Spleen (tissue), 13 donors: ENCODE measurements at regions of chr3 and their contacts with region 1.

Region 1: GRCh38 chr3:57755668-57756527 is at the start of gene SLMAP:
- DNase-seq: peak; percentile 100
- H3K4me3 ChIP-seq: peak within 1 kb of the TSS; percentile 87 to 98 (median 94)
- H3K27ac ChIP-seq: peak within 1 kb of the TSS; percentile 86 to 94 (median 90)
- H3K4me1 ChIP-seq: peaks cover 38 to 49% (median 44%) of the 10 kb centered on the region in 6 donors
- H3K27me3 ChIP-seq: no peaks in the 10 kb centered on the region
- CTCF ChIP-seq: peak in 4 of 11 experiments; percentile 8 to 21 (median 12)
- POLR2A ChIP-seq: peak in 2 of 3 donors; percentile 22 to 53
- total RNA-seq, gene SLMAP: 50.8 to 77.3 (median 70.4) TPM

Region 2: DNA sequence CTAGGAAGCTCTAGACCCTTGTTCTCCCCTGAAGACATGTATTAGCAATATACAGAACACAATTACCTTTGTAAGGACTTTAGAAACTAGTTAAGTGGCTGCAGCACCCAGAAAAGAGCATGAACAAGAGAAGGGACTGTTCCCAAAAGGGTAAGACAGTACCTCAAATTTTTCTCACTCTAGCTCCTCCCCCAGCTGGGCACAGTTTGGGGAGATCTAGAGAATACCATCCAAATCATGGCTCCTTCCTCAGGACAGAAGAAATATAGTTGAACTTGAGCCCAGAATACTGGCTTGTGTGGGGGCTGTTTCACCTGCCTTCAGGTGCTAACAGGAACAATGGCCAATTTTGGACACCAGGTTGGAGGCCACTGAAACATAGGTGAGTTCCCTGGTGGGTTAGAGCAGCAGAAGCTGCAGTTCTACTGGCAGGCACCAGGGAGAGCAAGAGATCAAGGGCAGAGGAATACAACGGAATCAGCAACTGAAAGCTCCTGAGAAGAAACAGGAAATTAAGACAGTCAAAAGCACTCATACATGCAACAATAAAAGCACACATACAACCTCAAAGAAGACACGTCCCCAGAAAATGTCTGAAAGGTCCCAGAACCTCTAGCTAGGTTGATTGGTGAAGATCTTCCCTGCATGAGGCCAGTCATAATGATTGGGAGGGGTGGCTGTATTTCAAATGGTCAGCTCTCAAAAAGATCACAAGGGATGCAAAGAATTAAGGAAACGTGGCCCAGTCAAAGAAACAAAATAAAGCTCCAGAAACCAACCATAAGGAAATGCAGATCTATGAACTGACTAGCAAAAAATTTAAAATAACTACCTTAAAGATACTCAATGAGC is 358.5 kb before region 1 on chr3:
- intact Hi-C with region 1: no loop called
- DNase-seq: no peak
- H3K4me3 ChIP-seq: peak overlapping the region in 1 of 8 donors; percentile 27
- H3K27ac ChIP-seq: no peak overlapping the region
- H3K4me1 ChIP-seq: peaks cover 0 to 8% (median 3%) of the 10 kb centered on the region in 6 donors
- H3K27me3 ChIP-seq: no peaks in the 10 kb centered on the region
- CTCF ChIP-seq: peak; percentile 62 to 85 (median 81)
- POLR2A ChIP-seq: no peak

Region 3: DNA sequence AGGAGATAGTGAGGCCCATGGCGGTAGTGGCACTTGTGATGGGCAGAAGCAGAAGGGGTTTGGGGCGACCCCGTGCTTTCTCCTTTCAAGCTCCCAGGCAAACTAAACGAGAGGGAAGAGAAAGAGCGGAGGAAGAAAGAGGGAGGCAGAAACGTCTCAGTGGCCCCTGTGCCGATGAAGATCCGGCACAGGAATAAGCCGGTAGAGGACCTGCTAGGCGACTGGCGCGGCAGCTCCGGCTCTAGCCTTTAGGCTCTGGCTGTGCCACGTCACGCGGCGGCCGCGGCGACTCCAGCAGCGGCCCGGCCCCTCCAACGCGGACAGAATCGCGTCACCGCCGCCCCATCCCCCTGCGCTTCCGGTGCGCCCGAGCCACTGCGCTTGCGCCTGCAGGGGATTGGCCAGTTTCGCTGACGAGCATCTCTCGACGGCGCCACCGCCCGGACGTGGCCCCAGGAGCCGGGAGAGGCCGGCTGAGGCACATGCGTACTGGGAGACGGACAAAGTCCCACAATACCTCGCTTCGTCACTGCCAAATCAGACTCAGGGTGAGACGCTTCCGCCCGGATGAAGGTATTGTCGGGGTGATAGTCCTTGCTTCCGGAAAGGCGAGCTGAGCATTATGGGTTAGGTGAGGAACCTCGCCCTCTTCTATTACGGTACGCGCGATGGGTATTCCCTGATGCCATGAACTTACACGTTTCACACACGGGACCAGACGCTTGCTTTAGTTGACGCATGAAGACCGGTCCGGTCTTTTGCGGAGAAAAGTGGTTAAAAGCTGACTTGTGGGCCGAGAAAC is 158.6 kb before region 1 on chr3 and contains the start of gene ARF4:
- intact Hi-C with region 1: loop called (anchors 10 kb)
- DNase-seq: peak; percentile 100
- H3K4me3 ChIP-seq: peak within 1 kb of the TSS; percentile 68 to 88 (median 80)
- H3K27ac ChIP-seq: peak within 1 kb of the TSS; percentile 95 to 99 (median 98)
- H3K4me1 ChIP-seq: peaks cover 32 to 65% (median 55%) of the 10 kb centered on the region in 6 donors
- H3K27me3 ChIP-seq: no peaks in the 10 kb centered on the region
- CTCF ChIP-seq: peak in 8 of 11 experiments; percentile 3 to 67 (median 54)
- POLR2A ChIP-seq: peak; percentile 85 to 95 (median 88)
- total RNA-seq, gene ARF4: 68.1 to 88.7 (median 75.0) TPM

Region 4: GRCh38 chr3:57692259-57693147 is 63.4 kb before region 1 on chr3 and contains the start of gene DENND6A:
- intact Hi-C with region 1: loop called (anchors 10 kb)
- DNase-seq: peak; percentile 100
- H3K4me3 ChIP-seq: peak within 1 kb of the TSS; percentile 77 to 98 (median 90)
- H3K27ac ChIP-seq: peak within 1 kb of the TSS; percentile 91 to 100 (median 100)
- H3K4me1 ChIP-seq: peaks cover 18 to 57% (median 46%) of the 10 kb centered on the region in 6 donors
- H3K27me3 ChIP-seq: no peaks in the 10 kb centered on the region
- CTCF ChIP-seq: peak in 3 of 11 experiments; percentile 7 to 32 (median 31)
- POLR2A ChIP-seq: peak; percentile 91 to 93 (median 93)
- total RNA-seq, gene DENND6A: 28.2 to 92.1 (median 39.8) TPM